ENCODE measurements at regions of chr6 and their contacts with region 1.

Region 1: GRCh38 chr6:33454009-33454946 is at the start of gene ZBTB9:
- DNase-seq: peak; percentile 96
- H3K4me3 Mint-ChIP-seq: peak within 1 kb of the TSS; percentile 95
- H3K27ac Mint-ChIP-seq: peak within 1 kb of the TSS; percentile 88
- H3K4me1 Mint-ChIP-seq: peaks cover 42% of the 10 kb centered on the region
- H3K27me3 Mint-ChIP-seq: no peaks in the 10 kb centered on the region
- total RNA-seq, gene ZBTB9: 15.8 and 17.0 TPM in 2 replicates

Region 2: DNA sequence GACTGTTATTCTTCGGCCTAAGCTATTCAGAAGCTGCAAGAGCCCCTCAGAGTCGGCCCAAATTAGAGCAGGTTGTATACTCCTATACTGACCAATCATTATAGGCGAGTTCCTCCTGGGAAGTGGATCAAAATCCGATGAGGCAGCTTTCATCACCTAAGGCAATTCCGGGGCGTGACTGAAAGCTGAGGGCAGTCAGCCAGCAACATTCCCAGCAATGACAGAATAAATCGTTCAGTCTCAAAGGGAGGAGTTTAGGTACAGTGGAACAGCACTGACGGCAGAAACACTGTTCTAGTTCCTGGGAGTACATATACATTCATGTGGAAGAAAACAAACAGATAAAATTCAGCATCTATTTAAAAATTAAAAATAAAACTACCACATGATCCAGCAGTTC is 701.7 kb before region 1 on chr6:
- intact Hi-C with region 1: no loop called
- DNase-seq: no peak
- H3K4me3 Mint-ChIP-seq: no peak overlapping the region
- H3K27ac Mint-ChIP-seq: no peak overlapping the region
- H3K4me1 Mint-ChIP-seq: no peaks in the 10 kb centered on the region
- H3K27me3 Mint-ChIP-seq: peaks cover 26% of the 10 kb centered on the region

Region 3: GRCh38 chr6:33049323-33050013 is 404.8 kb before region 1 on chr6:
- intact Hi-C with region 1: no loop called
- DNase-seq: no peak
- H3K4me3 Mint-ChIP-seq: no peak overlapping the region
- H3K27ac Mint-ChIP-seq: no peak overlapping the region
- H3K4me1 Mint-ChIP-seq: no peaks in the 10 kb centered on the region
- H3K27me3 Mint-ChIP-seq: peaks cover 44% of the 10 kb centered on the region

Region 4: GRCh38 chr6:33288921-33289748 is 165.1 kb before region 1 on chr6 and contains the starts of genes PFDN6 and WDR46:
- intact Hi-C with region 1: loop called (anchors 1 kb)
- DNase-seq: peak; percentile 83
- H3K4me3 Mint-ChIP-seq: peak within 1 kb of the TSS; percentile 98
- H3K27ac Mint-ChIP-seq: peak within 1 kb of the TSS; percentile 86
- H3K4me1 Mint-ChIP-seq: peaks cover 31% of the 10 kb centered on the region
- H3K27me3 Mint-ChIP-seq: no peaks in the 10 kb centered on the region
- total RNA-seq, gene PFDN6: 122 and 126 TPM in 2 replicates
- total RNA-seq, gene WDR46: 113 and 123 TPM in 2 replicates

Region 5: GRCh38 chr6:33323623-33323948 is 130.7 kb before region 1 on chr6:
- intact Hi-C with region 1: loop called (anchors 1 kb)
- DNase-seq: no peak
- H3K4me3 Mint-ChIP-seq: peak overlapping the region; percentile 97
- H3K27ac Mint-ChIP-seq: peak overlapping the region; percentile 98
- H3K4me1 Mint-ChIP-seq: peaks cover 55% of the 10 kb centered on the region
- H3K27me3 Mint-ChIP-seq: no peaks in the 10 kb centered on the region

Region 6: DNA sequence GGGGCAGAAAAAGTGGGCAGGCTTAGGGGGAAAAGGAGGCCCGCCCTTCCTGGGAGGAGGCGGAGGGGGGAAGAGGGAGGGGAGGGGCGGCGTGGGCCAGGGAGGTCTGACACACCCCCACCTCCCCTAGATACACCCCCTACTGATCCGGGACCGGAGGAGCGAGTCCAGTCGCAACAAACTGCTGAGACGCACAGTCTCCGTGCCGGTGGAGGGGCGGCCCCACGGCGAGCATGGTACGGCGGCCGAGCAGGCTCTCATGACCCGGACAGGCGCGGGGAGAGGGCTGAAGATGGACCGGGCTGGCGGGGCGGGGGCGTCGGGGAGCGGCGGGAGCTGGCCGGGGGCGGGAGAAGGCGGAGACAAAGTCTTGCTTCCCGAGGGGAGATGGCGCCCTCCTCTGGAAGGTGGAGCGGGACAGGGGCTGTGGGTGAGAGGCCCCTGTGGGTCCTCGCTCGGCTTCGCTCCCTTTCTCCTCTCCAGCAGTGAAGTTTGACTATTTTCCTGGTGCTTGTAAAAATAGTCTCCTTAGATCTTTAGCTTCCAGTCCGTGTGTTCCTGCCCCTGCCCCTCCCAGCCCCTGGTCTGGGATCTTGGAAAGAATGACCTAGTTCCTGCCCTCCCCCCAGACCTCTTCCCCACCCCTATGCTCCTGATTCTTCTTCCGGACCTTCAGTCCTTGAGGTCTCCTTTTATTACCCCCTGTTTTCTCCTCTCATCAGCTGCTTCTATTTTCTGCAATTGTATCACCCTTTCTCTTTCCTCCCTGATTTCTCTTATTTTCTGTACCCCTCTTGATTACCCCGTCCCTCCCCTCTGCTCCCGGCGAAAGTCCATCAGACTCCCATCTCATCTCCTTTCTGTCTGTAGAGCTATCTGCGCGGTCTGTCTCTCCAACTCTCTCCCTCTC is 28.4 kb before region 1 on chr6:
- intact Hi-C with region 1: loop called (anchors 1 kb)
- DNase-seq: peak; percentile 72
- H3K4me3 Mint-ChIP-seq: peak overlapping the region; percentile 89
- H3K27ac Mint-ChIP-seq: peak overlapping the region; percentile 92
- H3K4me1 Mint-ChIP-seq: peaks cover 77% of the 10 kb centered on the region
- H3K27me3 Mint-ChIP-seq: no peaks in the 10 kb centered on the region

Region 7: GRCh38 chr6:33535104-33535603 is 80.9 kb after region 1 on chr6:
- intact Hi-C with region 1: loop called (anchors 1 kb)
- DNase-seq: no peak
- H3K4me3 Mint-ChIP-seq: no peak overlapping the region
- H3K27ac Mint-ChIP-seq: no peak overlapping the region
- H3K4me1 Mint-ChIP-seq: peaks cover 24% of the 10 kb centered on the region
- H3K27me3 Mint-ChIP-seq: no peaks in the 10 kb centered on the region

Region 8: GRCh38 chr6:33579828-33580714 is 125.8 kb after region 1 on chr6 and contains the start of gene BAK1:
- intact Hi-C with region 1: loop called (anchors 1 kb)
- DNase-seq: peak; percentile 81
- H3K4me3 Mint-ChIP-seq: peak within 1 kb of the TSS; percentile 90
- H3K27ac Mint-ChIP-seq: peak within 1 kb of the TSS; percentile 90
- H3K4me1 Mint-ChIP-seq: peaks cover 43% of the 10 kb centered on the region
- H3K27me3 Mint-ChIP-seq: no peaks in the 10 kb centered on the region
- total RNA-seq, gene BAK1: 67.0 and 67.9 TPM in 2 replicates

Region 9: DNA sequence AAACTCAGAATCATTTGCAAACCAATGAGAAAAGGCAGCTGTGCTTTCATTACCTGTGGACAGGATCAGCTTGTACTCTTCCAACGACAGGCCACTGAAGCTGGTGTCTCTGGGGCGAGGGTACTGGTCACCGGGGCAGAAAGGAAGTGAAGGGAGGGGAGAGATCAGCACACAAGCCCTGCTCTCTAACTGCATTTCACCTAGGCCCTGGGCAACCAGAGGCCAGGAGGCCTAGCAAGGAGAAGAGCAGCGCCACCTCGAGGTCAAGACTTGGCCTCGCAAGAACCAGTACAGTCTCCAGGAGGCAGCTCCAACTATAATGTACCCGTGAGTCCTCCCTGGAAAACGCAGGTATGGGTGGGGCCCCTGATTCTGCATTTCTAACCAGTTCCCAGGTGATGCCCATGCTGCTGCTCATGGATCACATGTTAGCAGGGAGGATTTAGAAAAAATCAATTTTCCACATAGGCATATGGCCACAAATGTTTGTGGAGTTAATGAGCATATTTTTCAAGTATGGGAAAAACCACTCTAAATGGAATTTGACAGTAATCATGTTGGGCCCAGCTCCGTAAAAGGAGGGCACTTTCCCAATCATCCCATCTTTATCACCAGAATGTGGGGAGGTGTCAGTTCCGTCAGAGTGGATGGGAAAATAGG is 246.2 kb after region 1 on chr6:
- intact Hi-C with region 1: loop called (anchors 10 kb)
- DNase-seq: peak; percentile 69
- H3K4me3 Mint-ChIP-seq: no peak overlapping the region
- H3K27ac Mint-ChIP-seq: peak overlapping the region; percentile 1
- H3K4me1 Mint-ChIP-seq: peaks cover 31% of the 10 kb centered on the region
- H3K27me3 Mint-ChIP-seq: no peaks in the 10 kb centered on the region

Measured in activated T-helper 1 cell treated with anti-CD3 and anti-CD28 coated beads, Interleukin-12 subunit alpha, Interleukin-12 subunit beta, Interleukin-2, Interleukin-4 antibody, amounts not matched to agents 30 ng/mL and 10 ng/mL and 1 ng/mL, durations not matched to agents 14 hours and 24 hours and 36 hours (primary cell).